ENCODE measurements at regions of chr17 and their contacts with region 1.

Region 1: GRCh38 chr17:1628856-1629646 is 417 bp upstream of the SLC43A2 start:
- DNase-seq: peak; percentile 91
- ATAC-seq: peak; percentile 85
- H3K4me3 ChIP-seq: peak overlapping the region; percentile 62 to 93 (median 90)
- H3K27ac ChIP-seq: peak overlapping the region; percentile 71
- H3K4me1 ChIP-seq: peaks cover 40% of the 10 kb centered on the region
- H3K27me3 ChIP-seq: peaks cover 0 to 2% of the 10 kb centered on the region in 2 experiments; a peak in 1 of 5 replicates
- CTCF ChIP-seq: peak; percentile 50
- EP300 ChIP-seq: no peak; a peak in 1 of 4 replicates
- POLR2A ChIP-seq: 0 out of 4 replicates have a peak, but pooled peaks of 1 of the 2 experiments have one; percentile 42
- RAD21 ChIP-seq: peak; percentile 78

Region 2: DNA sequence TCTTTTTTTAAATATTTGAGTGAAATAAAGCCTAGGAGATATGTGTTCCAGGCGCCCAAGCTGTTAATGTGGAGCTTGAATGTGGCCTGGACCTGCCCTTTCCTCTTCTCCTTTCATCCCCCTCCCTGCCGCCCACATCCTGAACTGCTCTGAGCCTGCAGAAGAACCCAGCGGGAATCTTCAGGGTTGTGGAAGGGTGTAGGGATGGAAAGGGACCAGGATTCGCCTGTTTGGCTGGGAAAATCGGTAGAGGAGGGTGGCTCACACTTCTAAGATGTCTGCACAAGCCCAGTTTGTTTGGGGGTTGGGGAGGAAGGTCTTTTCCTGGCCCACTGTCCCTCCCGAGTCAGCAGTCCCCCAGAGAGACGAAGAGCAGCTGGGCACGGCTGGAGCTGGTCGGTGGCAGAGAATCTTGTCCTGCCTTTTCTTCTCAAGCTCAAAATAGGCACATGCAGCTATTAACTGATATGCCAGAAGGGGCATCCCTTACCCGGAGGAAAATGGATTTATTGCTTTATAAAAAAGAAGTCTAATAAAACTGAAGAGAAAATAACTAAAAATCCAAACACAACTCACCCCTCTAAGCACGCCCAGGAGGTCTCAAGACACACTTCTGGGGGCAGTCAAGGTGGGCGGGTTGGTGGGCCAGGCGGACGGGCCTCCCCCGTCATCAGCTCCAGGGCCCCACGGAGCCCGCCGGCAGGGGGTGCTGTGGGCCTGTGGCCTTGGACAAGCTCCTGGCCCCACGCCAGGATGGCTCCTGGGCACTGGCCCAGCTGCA is 54.9 kb before region 1 on chr17:
- CTCF ChIA-PET with region 1: interaction called, 55 read pairs
- POLR2A ChIA-PET with region 1: interaction called, 27 read pairs
- in situ Hi-C with region 1: loop called (anchors 5 kb)
- intact Hi-C with region 1: loop called (anchors 1 kb)
- DNase-seq: peak; percentile 63
- ATAC-seq: peak; percentile 70
- H3K4me3 ChIP-seq: no peak overlapping the region
- H3K27ac ChIP-seq: no peak overlapping the region
- H3K4me1 ChIP-seq: peaks cover 56% of the 10 kb centered on the region
- H3K27me3 ChIP-seq: peaks cover 10 to 12% of the 10 kb centered on the region in 2 experiments; a peak in 3 of 5 replicates
- CTCF ChIP-seq: peak; percentile 96
- EP300 ChIP-seq: peak in 1 of 2 experiments; percentile 30; a peak in 1 of 4 replicates
- POLR2A ChIP-seq: no peak
- RAD21 ChIP-seq: peak; percentile 97

Region 3: DNA sequence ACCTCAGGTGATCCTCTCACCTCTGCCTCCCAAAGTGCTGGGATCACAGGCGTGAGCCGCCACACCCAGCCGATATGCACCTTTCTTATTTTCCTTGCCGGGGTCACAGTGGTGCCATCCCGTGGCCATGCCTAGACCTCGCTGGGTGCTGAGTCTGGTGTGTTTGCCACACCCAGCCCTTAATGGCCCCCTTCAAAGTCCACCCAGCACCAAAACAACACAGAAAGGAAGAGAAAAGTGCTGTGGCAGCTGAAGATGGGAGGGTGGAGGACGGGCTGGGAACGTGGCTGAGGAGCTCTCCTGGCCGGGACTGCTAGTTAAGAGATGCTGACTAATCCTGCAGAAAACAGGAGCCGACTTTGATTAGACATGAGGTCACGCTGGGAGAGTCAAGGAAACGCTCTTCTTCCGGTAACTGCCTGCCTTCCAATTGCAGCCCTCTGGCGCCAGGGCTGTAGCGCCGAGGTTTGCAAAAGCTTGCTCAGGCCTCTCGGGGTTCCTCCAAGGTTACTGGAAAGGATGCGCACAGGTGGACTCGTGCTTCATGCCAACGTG is 11.4 kb before region 1 on chr17:
- CTCF ChIA-PET with region 1: no interaction called
- POLR2A ChIA-PET with region 1: no interaction called
- in situ Hi-C with region 1: no loop called
- intact Hi-C with region 1: no loop called
- DNase-seq: no peak
- ATAC-seq: no peak
- H3K4me3 ChIP-seq: no peak overlapping the region
- H3K27ac ChIP-seq: no peak overlapping the region
- H3K4me1 ChIP-seq: peaks cover 46% of the 10 kb centered on the region
- H3K27me3 ChIP-seq: no peaks in the 10 kb centered on the region
- CTCF ChIP-seq: 0 out of 2 replicates have a peak, but pooled peaks have one; percentile 11
- EP300 ChIP-seq: no peak
- POLR2A ChIP-seq: no peak
- RAD21 ChIP-seq: no peak

Region 4: DNA sequence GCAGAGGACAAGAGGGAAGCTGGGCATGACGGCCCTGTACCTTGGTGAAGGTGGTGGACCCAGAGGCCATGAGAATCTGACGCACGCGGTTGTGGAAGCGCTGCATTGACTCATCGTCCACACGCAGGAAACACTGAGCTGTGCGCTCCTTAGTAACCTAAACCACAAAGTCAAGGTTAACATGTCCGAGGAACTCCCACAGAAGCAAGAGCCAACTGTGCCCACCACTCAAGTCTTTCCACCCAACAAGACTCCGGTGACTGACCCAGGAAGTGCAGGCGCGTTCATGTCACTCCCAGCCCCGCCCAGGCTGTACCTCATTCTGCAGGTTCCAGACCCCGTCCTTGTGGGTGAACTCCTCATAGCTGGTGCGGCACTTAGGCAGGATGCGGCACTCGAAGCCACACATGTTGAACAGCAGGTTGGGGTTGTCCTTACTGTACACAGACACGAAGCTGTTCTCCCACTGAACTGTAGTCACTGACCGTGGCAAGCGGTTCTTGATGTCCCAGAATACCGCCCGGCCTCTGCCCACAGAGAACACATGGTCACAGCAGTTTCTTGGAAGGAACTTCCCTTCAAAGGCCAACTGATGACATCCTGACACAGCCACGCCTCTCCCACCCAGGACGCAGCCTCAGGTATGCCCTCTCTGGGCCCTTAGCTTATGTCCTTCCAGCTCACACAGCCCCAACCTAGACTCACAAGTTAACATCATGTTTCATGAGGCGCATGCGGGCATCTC is 44.2 kb after region 1 on chr17:
- CTCF ChIA-PET with region 1: no interaction called
- POLR2A ChIA-PET with region 1: no interaction called
- in situ Hi-C with region 1: no loop called
- intact Hi-C with region 1: no loop called
- DNase-seq: no peak
- ATAC-seq: no peak
- H3K4me3 ChIP-seq: no peak overlapping the region
- H3K27ac ChIP-seq: no peak overlapping the region
- H3K4me1 ChIP-seq: no peaks in the 10 kb centered on the region
- H3K27me3 ChIP-seq: no peaks in the 10 kb centered on the region
- CTCF ChIP-seq: no peak
- EP300 ChIP-seq: no peak
- POLR2A ChIP-seq: 0 out of 4 replicates have a peak, but pooled peaks of 1 of the 2 experiments have one; percentile 12
- RAD21 ChIP-seq: no peak